CD4-positive, alpha-beta T cell (primary cell): ENCODE measurements at regions of chr10 and their contacts with region 1.

Region 1: GRCh38 chr10:81280497-81281479 is 594.2 kb upstream of the NRG3 start:
- DNase-seq: no peak
- ATAC-seq: no peak
- H3K4me3 ChIP-seq: no peak overlapping the region
- H3K4me3 Mint-ChIP-seq: no peak overlapping the region
- H3K27ac ChIP-seq: no peak overlapping the region
- H3K27ac Mint-ChIP-seq: no peak overlapping the region
- H3K4me1 ChIP-seq: no peaks in the 10 kb centered on the region
- H3K4me1 Mint-ChIP-seq: no peaks in the 10 kb centered on the region
- H3K27me3 ChIP-seq: no peaks in the 10 kb centered on the region
- H3K27me3 Mint-ChIP-seq: no peaks in the 10 kb centered on the region
- CTCF ChIP-seq: no peak

Region 2: GRCh38 chr10:81314471-81314870 is 33.7 kb after region 1 on chr10:
- CTCF ChIA-PET with region 1: no interaction called
- POLR2A ChIA-PET with region 1: no interaction called
- intact Hi-C with region 1: loop called in 1 of 2 experiments (anchors 1 kb)
- DNase-seq: no peak
- ATAC-seq: no peak
- H3K4me3 ChIP-seq: no peak overlapping the region
- H3K4me3 Mint-ChIP-seq: no peak overlapping the region
- H3K27ac ChIP-seq: no peak overlapping the region
- H3K27ac Mint-ChIP-seq: no peak overlapping the region
- H3K4me1 ChIP-seq: no peaks in the 10 kb centered on the region
- H3K4me1 Mint-ChIP-seq: no peaks in the 10 kb centered on the region
- H3K27me3 ChIP-seq: no peaks in the 10 kb centered on the region
- H3K27me3 Mint-ChIP-seq: no peaks in the 10 kb centered on the region
- CTCF ChIP-seq: no peak